Common myeloid progenitor, CD34-positive (primary cell): ENCODE measurements at regions of chr16 and their contacts with region 1.

Region 1: DNA sequence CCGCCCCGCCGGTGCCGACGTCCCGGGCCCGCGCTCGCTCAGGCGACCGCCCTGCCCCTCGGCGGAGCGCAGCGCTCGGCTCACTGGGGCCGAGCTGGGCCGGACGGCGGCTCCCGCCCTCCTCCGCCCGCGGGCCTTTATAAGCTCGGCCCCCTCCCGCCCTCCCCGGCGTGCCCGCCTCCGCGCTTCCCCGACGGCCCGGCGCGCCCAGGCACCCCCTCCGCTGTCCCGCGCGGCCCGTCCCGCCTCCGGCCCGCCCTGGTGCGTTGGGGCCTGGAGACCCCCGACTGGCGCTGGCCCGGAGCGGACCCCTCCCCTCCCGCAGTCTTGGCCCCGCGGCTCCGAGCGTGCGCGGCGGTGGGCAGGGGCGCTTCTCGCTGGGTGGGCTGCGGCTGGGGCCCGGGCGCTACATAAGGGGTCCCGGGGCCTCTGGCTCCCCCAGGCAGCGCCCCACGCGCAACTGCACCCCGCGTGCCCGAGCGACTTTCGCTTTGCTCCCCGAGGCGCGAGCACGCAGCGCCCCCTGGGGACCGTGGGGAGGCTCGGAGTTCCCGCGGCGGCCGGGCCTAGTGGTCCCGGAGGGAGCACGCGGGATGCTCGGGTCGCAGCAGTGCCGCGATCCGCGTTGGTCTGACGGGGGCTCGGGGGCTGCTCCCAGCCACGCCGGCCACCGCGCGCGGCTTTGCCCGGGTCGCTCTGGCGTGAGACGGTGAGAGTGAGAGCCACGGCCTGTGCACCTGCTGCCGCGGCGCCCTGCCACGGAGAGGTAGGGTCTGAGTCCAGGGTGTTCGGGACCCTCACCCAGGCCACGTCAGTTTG is at the start of gene PIEZO1:
- DNase-seq: peak; percentile 78 to 84 (median 81)
- H3K4me3 ChIP-seq: peak within 1 kb of the TSS; percentile 65 to 88 (median 77)
- H3K27ac ChIP-seq: peak within 1 kb of the TSS; percentile 54 to 82
- H3K4me1 ChIP-seq: peaks cover 2 to 67% (median 58%) of the 10 kb centered on the region in 4 experiments
- H3K27me3 ChIP-seq: no peaks in the 10 kb centered on the region

Region 2: GRCh38 chr16:88697831-88698615 is 87.3 kb before region 1 on chr16:
- CTCF ChIA-PET with region 1: no interaction called
- POLR2A ChIA-PET with region 1: no interaction called
- DNase-seq: peak in 1 of 3 donors; percentile 25
- H3K4me3 ChIP-seq: no peak overlapping the region
- H3K27ac ChIP-seq: no peak overlapping the region
- H3K4me1 ChIP-seq: peaks cover 0 to 61% (median 54%) of the 10 kb centered on the region in 4 experiments
- H3K27me3 ChIP-seq: no peaks in the 10 kb centered on the region

Region 3: DNA sequence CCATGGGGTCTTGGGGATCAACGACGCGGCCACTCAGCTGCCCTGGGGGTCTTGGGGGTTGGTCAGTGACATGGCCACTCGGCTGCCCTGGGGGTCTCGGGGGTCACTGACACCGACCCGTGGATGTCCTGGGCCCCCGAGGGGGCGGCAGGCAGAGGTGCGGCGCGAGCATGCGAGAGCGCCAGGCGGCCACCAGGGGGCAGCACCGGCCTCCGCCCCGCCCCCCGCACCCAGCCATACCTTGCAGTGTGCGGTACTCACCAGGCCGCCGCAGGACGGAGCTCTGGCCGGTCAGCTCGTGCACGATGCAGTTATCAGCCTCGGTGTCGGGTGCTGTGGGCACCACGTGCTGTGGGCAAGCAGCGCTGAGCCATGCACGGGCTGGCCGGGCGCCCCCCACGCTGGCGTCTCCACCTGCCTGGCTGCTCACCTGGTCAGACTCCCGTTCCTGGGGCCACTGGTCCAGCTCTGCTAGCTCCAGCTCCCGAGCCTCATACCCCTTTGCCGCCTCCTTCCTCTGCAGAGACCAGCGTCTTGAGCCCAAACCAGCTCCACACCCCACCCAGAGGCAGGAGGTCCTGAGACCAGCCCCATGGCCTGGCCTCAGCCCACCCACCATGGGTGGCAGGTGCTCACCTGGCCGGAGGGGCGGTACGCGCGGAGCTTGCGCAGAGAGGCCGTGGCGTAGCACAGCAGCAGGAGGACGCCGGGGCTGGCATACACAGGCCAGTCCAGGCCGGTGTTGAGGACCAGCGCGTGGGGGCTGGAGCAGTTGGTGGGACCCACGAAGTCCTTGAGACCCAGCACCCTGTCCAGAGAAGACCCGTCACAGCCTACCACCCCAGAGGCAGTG is 47.8 kb before region 1 on chr16:
- CTCF ChIA-PET with region 1: interaction called, 81 read pairs
- POLR2A ChIA-PET with region 1: interaction called, 6 read pairs
- DNase-seq: peak; percentile 67 to 80 (median 80)
- H3K4me3 ChIP-seq: no peak overlapping the region
- H3K27ac ChIP-seq: no peak overlapping the region
- H3K4me1 ChIP-seq: peaks cover 0 to 4% (median 3%) of the 10 kb centered on the region in 4 experiments
- H3K27me3 ChIP-seq: no peaks in the 10 kb centered on the region

Region 4: GRCh38 chr16:88743693-88744576 is 41.4 kb before region 1 on chr16:
- CTCF ChIA-PET with region 1: interaction called, 81 read pairs
- POLR2A ChIA-PET with region 1: interaction called, 4 read pairs
- DNase-seq: peak; percentile 47 to 70 (median 63)
- H3K4me3 ChIP-seq: no peak overlapping the region
- H3K27ac ChIP-seq: no peak overlapping the region
- H3K4me1 ChIP-seq: peaks cover 0 to 31% (median 26%) of the 10 kb centered on the region in 4 experiments
- H3K27me3 ChIP-seq: no peaks in the 10 kb centered on the region

Region 5: GRCh38 chr16:88754912-88755744 is 30.2 kb before region 1 on chr16:
- CTCF ChIA-PET with region 1: interaction called, 81 read pairs
- POLR2A ChIA-PET with region 1: interaction called, 3 read pairs
- DNase-seq: peak in 1 of 3 donors; percentile 66
- H3K4me3 ChIP-seq: no peak overlapping the region
- H3K27ac ChIP-seq: peak overlapping the region in 1 of 2 experiments; percentile 34
- H3K4me1 ChIP-seq: peaks cover 0 to 34% (median 11%) of the 10 kb centered on the region in 4 experiments
- H3K27me3 ChIP-seq: no peaks in the 10 kb centered on the region

Region 6: DNA sequence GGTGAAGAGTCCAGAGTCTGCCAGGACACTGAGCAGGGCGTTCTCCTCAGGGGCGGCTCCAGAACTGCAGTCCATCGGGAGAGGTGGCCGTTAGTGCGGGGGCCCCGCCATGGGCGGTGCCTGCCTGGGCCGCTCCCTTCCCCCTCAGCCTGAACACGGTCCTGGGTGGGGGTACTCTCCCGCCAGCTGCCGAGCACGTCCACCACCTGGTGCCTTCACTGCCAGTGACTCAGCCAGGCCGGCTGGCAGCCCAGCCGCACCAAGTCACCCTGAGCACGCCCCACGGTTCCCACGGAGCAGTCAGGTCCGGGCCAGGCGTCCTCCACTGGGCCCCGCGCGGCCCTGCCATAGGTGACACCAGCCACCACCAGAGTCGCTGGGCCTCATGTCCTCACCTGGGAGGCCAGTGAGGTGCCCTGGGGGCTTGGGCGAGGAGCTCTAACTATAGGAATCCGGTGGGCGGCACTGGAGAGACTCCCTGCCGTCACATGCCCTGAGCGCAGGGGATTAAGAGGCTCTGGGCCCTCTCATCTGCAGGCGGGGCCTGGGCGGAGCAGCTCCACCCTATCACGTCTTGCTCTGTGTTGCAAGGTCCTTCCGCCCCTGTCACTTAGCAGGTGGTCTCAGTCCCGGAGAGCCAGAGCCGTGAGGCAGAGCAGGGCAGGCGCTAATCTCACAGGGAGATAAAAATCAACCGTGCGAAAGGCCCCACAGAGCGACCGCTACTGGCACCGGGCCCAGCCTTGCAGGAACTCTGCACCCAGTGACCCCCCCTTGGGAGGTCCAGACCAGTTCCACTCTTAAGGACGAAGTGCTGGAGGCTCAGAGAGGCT is 14.6 kb before region 1 on chr16:
- CTCF ChIA-PET with region 1: interaction called, 27 read pairs
- POLR2A ChIA-PET with region 1: interaction called, 15 read pairs
- DNase-seq: peak; percentile 95 to 99 (median 98)
- H3K4me3 ChIP-seq: peak overlapping the region in 4 of 7 experiments; percentile 24 to 54 (median 46)
- H3K27ac ChIP-seq: peak overlapping the region; percentile 72 to 87
- H3K4me1 ChIP-seq: peaks cover 0 to 82% (median 81%) of the 10 kb centered on the region in 4 experiments
- H3K27me3 ChIP-seq: no peaks in the 10 kb centered on the region

Region 7: GRCh38 chr16:88799569-88800276 is 14.4 kb after region 1 on chr16:
- CTCF ChIA-PET with region 1: interaction called, 15 read pairs
- POLR2A ChIA-PET with region 1: interaction called, 24 read pairs
- DNase-seq: peak; percentile 94 to 100 (median 99)
- H3K4me3 ChIP-seq: peak overlapping the region in 4 of 7 experiments; percentile 28 to 40 (median 35)
- H3K27ac ChIP-seq: peak overlapping the region; percentile 71 to 78
- H3K4me1 ChIP-seq: peaks cover 13 to 76% (median 60%) of the 10 kb centered on the region in 4 experiments
- H3K27me3 ChIP-seq: no peaks in the 10 kb centered on the region

Region 8: GRCh38 chr16:88811769-88812512 is 26.6 kb after region 1 on chr16 and contains the start of gene APRT:
- CTCF ChIA-PET with region 1: interaction called, 11 read pairs
- POLR2A ChIA-PET with region 1: interaction called, 6 read pairs
- DNase-seq: peak; percentile 87 to 94 (median 93)
- H3K4me3 ChIP-seq: peak within 1 kb of the TSS; percentile 50 to 85 (median 77)
- H3K27ac ChIP-seq: peak within 1 kb of the TSS; percentile 53 to 81
- H3K4me1 ChIP-seq: peaks cover 0 to 42% (median 35%) of the 10 kb centered on the region in 4 experiments
- H3K27me3 ChIP-seq: no peaks in the 10 kb centered on the region

Region 9: DNA sequence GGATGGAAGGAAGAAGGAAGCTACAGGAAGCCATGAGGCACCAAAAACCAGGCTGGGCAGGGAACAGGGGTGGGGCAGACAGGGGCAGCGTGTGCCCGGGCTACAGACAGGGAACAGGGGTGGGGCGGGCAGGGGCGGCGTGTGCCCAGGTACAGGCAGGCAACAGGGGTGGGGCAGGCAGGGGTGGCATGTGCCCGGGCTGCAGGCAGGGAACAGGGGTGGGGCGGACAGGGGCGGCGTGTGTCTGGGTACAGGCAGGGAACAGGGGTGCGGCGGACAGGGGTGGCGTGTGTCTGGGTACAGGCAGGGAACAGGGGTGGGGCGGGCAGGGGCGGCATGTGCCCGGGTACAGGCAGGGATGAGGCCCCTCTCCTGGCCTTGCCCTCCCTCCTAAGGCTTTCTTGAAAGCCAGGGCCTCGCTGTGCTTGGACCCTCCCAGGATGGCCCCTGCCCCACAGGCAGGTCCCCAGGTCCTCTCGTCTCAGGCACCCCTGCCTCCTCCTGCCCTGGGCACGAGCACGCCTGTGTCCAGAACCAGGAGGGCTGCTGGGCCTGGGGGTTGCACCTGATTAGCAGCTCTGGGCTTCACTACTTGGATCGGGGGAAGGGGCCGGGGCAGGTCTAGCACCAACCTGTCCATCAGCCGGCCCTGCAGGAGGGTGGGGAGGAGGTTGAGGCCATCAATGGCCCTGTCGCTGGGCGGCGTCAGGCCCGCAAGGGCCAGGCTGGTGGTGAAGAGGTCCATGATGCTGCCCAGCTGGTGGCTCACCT is 40.9 kb after region 1 on chr16:
- CTCF ChIA-PET with region 1: no interaction called
- POLR2A ChIA-PET with region 1: no interaction called
- DNase-seq: no peak
- H3K4me3 ChIP-seq: no peak overlapping the region
- H3K27ac ChIP-seq: no peak overlapping the region
- H3K4me1 ChIP-seq: no peaks in the 10 kb centered on the region
- H3K27me3 ChIP-seq: no peaks in the 10 kb centered on the region